ENCODE measurements at regions of chr4 and their contacts with region 1.

Region 1: DNA sequence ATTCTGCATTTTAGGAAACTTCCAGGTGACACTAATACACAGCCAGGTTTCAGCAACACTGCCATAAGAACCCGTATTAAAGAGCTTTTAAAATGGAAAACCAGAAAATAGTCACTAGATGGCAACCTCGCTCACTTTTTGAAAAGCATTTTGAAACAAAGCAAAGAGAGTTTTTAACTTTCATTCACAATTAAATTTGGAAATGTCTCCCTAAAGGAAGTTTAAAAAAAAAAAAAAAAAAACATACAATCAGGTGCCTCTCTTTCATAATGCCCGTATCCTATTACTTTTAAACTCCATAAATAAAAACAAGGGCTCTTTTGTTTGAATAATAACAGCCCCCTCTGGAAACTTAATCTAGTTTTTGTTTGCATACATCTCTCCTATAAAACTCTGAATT is 20.3 kb downstream of the MEPE start:
- DNase-seq: no peak
- H3K4me3 ChIP-seq: no peak overlapping the region
- H3K27ac ChIP-seq: no peak overlapping the region
- H3K4me1 ChIP-seq: peaks cover 3% of the 10 kb centered on the region
- H3K27me3 ChIP-seq: no peaks in the 10 kb centered on the region
- CTCF ChIP-seq: peak in 2 of 3 experiments; percentile 26 to 38

Region 2: DNA sequence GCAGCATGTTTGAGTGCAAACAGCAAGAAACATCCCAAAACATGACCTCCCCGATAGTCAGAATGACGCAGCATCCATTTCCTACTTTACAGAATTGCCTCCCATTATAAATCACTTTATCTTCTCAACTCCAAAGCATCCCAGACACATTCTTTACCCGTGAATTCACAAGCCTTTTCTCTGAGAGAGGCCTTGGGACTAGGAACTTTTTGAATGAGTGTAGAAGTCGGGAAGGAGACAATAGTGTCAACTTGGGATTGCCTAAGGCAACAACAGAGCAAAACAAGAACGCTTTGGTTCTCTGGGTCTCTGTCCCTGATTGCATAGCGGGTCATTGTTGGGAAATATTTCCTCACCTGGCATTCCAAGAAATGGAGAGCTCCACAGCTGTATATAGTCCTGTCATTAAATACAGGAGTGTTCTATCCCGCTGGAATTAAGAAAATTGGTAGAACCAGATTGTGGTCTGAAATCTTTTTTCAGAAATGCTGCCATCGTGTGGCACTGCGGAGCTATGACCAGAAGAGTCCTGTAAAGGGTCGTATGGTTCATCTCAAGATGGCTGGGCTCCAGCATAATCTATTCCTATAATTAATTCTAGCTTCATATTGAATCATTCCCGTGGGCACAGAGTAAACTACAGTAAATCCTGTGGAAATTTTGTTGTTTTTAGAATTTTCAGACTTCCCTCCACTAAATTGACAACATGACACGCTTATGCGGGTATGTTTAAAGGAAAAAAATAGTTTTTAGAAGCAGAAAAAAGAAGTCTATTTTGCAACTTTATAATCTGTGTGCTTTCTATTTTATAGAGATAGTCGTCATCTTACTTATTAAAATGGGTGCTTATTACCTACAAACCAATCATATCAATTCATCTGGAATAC is 120.4 kb after region 1 on chr4:
- dilution Hi-C with region 1: loop called (anchors 25 kb)
- DNase-seq: peak; percentile 40
- H3K4me3 ChIP-seq: peak overlapping the region in 2 of 3 experiments; percentile 21 to 64
- H3K27ac ChIP-seq: peak overlapping the region; percentile 64
- H3K4me1 ChIP-seq: peaks cover 18% of the 10 kb centered on the region
- H3K27me3 ChIP-seq: no peaks in the 10 kb centered on the region
- CTCF ChIP-seq: peak; percentile 64 to 77 (median 69)

Region 3: DNA sequence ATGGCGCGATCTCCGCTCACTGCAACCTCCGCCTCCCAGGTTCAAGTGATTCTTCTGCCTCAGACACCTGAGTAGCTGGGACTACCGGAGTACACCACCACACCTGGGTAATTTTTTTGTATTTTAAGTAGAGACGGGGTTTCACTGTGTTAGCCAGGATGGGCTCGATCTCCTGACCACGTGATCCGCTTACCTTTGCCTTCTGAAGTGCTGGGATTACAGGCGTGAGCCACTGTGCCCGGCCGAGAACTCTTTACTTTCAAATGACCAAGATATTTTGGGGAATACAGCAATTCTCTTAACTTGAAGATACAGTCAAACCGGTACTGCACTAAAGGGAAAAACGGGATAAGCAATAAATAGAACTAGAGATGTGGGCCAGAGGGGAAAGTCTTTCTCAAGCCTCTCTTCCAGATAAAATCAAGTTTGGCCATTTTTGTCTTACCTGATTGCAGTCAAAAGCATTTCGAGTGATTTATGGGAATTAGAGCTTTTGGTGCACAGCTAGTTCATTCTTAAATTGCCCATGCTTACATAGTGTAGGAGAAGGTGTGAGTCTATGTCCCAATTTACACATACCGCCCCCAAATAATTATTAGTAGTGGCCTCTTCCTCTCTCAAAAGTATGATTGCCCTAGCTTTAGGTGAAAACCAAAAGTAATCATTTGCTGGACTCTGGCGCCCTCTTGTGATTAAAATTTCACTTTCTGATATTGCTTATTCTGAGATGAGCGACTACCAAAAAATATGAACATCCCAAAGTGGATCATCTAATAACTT is 358.6 kb after region 1 on chr4:
- dilution Hi-C with region 1: loop called (anchors 25 kb)
- DNase-seq: no peak
- H3K4me3 ChIP-seq: no peak overlapping the region
- H3K27ac ChIP-seq: no peak overlapping the region
- H3K4me1 ChIP-seq: no peaks in the 10 kb centered on the region
- H3K27me3 ChIP-seq: no peaks in the 10 kb centered on the region
- CTCF ChIP-seq: peak in 2 of 3 experiments; percentile 41 to 51

Measured in keratinocyte (primary cell).